GM12878 (cell line): ENCODE measurements at regions of chr2 and their contacts with region 1.

Region 1: DNA sequence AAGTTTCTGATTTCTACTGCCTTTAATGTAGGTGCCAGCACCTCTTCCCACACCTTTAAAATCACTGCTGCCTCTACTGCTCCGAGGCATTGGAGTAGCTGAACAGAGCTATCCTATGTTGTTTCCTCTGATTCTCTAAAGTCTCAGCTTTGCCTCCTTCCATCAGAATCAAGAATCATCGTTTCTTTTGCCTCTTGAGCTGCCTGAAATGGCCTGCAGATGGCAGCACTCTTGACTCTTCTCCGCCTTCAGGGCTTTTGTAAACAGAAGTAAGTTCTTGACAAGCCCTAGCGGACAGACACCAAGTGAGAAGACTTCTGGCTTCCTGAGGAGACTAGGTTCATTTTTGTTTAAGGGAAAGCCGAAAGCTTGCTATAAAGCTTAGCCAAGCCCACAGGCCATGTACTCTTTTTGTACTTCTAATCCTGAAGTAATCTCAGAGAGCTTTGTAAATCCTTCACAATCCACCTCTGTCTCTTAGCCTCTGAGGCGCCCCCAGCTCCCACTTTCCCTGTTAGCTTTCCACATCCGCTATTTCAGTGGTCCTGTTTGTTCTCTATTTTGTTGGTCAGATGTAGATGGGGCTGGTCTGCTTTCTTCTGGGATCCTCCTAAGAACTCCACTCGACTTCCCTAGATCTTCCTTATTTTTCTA is 48.4 kb downstream of the GTF3C3 start:
- DNase-seq: peak; percentile 30
- ATAC-seq: peak; percentile 99
- H3K4me3 ChIP-seq: no peak overlapping the region
- H3K27ac ChIP-seq: no peak overlapping the region
- H3K4me1 ChIP-seq: no peaks in the 10 kb centered on the region; the same call in 1 of the 2 replicates
- H3K27me3 ChIP-seq: no peaks in the 10 kb centered on the region
- CTCF ChIP-seq: peak; percentile 76 to 84 (median 84)
- EP300 ChIP-seq: no peak
- POLR2A ChIP-seq: no peak
- RAD21 ChIP-seq: peak; percentile 47

Region 2: GRCh38 chr2:196291873-196292800 is 459.0 kb before region 1 on chr2:
- CTCF ChIA-PET with region 1: no interaction called
- POLR2A ChIA-PET with region 1: no interaction called
- RAD21 ChIA-PET with region 1: no interaction called
- SMC1A ChIA-PET with region 1: no interaction called
- in situ Hi-C with region 1: no loop called
- intact Hi-C with region 1: loop called (anchors 10 kb)
- DNase-seq: no peak
- ATAC-seq: peak; percentile 10
- H3K4me3 ChIP-seq: no peak overlapping the region
- H3K27ac ChIP-seq: peak overlapping the region; percentile 51; the same call in 1 of the 2 replicates
- H3K4me1 ChIP-seq: peaks cover 32% of the 10 kb centered on the region
- H3K27me3 ChIP-seq: no peaks in the 10 kb centered on the region
- CTCF ChIP-seq: no peak
- EP300 ChIP-seq: no peak
- POLR2A ChIP-seq: no peak
- RAD21 ChIP-seq: no peak

Region 3: DNA sequence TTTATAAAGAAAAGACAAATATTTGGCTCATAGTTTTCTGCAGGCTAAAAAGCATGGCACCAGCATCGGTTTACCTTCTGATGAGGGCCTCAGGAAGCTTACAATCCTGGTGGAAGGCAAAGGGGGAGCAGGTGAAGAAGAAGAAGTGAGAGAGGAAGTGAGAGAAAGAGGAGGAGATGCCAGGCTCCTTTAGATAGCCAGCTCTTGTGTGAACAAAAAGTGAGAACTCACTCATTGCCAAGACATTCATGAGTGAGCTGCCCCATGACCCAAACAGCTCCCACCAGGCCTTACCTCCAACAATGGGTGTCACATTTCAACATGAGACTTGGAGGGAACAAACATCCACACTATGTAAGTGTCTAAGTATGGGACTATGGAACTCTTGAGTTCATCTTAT is 97.3 kb before region 1 on chr2:
- CTCF ChIA-PET with region 1: no interaction called
- POLR2A ChIA-PET with region 1: no interaction called
- RAD21 ChIA-PET with region 1: no interaction called
- SMC1A ChIA-PET with region 1: no interaction called
- in situ Hi-C with region 1: no loop called
- intact Hi-C with region 1: no loop called
- DNase-seq: no peak
- ATAC-seq: no peak
- H3K4me3 ChIP-seq: no peak overlapping the region
- H3K27ac ChIP-seq: no peak overlapping the region
- H3K4me1 ChIP-seq: no peaks in the 10 kb centered on the region
- H3K27me3 ChIP-seq: no peaks in the 10 kb centered on the region
- CTCF ChIP-seq: no peak
- EP300 ChIP-seq: no peak
- POLR2A ChIP-seq: no peak
- RAD21 ChIP-seq: no peak

Region 4: DNA sequence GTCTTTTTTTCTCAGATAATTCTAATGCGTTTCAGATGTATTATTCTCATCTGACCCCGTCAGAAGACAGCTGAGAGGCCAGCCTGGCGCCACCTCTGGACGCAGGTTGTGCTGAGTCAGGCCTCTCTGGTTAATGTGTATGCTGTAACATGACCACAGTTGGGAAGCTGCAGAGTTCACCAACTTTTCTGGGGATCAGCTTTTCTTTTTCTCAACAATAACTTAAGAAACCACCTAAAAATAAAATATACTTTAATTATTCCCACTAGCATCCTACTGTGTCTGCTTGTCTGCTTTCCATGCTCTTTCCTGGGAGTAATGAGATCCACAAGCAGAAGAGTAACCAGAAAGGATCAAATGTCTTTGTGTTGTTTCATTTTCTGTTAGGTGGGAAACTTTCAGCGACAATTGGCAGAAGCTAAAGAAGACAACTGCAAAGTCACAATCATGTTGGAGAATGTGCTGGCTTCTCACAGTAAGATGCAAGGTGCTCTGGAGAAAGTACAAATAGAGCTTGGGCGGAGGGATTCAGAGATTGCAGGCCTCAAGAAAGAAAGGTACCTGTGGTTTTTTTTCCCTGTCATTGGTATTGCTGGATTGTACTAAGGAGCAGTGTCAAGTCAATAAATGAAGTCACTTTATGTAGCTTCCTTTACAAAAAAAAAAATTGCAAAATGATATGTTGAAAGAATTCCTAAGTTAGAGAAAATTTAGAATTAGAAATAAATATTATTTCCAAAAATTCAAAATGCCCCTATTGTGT is 31.8 kb before region 1 on chr2:
- CTCF ChIA-PET with region 1: interaction called, 10 read pairs
- POLR2A ChIA-PET with region 1: no interaction called
- RAD21 ChIA-PET with region 1: no interaction called
- SMC1A ChIA-PET with region 1: interaction called, 3 read pairs
- in situ Hi-C with region 1: no loop called
- intact Hi-C with region 1: no loop called
- DNase-seq: no peak
- ATAC-seq: peak; percentile 67
- H3K4me3 ChIP-seq: no peak overlapping the region
- H3K27ac ChIP-seq: no peak overlapping the region
- H3K4me1 ChIP-seq: no peaks in the 10 kb centered on the region
- H3K27me3 ChIP-seq: no peaks in the 10 kb centered on the region
- CTCF ChIP-seq: 0 out of 6 replicates have a peak, but pooled peaks of 1 of the 3 experiments have one; percentile 9
- EP300 ChIP-seq: no peak
- POLR2A ChIP-seq: no peak
- RAD21 ChIP-seq: no peak

Region 5: DNA sequence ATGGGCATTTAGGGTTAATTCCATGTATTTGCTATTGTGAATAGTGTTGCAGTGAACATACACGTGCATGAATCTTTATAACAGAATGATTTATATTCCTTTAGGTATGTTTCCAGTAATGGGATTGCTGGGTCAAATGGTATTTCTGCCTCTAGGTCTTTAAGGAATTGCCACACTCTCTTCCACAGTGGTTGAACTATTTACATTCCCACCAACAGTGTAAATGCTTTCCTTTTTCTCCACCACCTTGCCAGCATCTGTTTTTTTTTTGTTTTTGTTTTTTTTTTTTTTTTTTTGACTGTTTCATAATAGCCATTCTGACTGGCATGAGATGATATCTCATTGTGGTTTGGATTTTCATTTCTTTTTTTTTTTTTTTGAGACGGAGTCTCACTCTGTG is 14.1 kb before region 1 on chr2:
- CTCF ChIA-PET with region 1: interaction called, 31 read pairs
- POLR2A ChIA-PET with region 1: interaction called, 3 read pairs
- RAD21 ChIA-PET with region 1: no interaction called
- SMC1A ChIA-PET with region 1: interaction called, 10 read pairs
- in situ Hi-C with region 1: no loop called
- intact Hi-C with region 1: no loop called
- DNase-seq: no peak
- ATAC-seq: no peak
- H3K4me3 ChIP-seq: no peak overlapping the region
- H3K27ac ChIP-seq: no peak overlapping the region
- H3K4me1 ChIP-seq: no peaks in the 10 kb centered on the region
- H3K27me3 ChIP-seq: no peaks in the 10 kb centered on the region
- CTCF ChIP-seq: no peak
- EP300 ChIP-seq: no peak
- POLR2A ChIP-seq: no peak
- RAD21 ChIP-seq: no peak

Region 6: DNA sequence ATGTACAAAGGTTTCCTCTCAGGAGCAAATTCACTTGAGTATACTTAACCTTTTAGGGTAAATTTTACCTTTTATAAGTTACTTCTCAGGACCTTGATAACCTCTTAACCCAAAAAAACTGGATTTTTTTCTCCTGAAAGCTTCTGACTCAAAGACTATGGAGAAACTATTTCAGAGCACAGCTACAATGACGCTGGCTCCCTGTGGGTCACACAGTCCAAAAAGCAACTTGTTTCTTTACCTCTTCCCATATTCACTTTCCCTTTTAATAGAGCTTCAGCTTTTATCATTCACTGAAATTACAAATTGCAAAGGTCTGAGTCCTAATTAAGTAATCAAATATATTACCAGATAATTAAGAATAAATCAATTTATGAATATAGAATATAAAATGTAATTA is 16.0 kb after region 1 on chr2:
- CTCF ChIA-PET with region 1: interaction called, 31 read pairs
- POLR2A ChIA-PET with region 1: no interaction called
- RAD21 ChIA-PET with region 1: no interaction called
- SMC1A ChIA-PET with region 1: interaction called, 11 read pairs
- in situ Hi-C with region 1: no loop called
- intact Hi-C with region 1: no loop called
- DNase-seq: no peak
- ATAC-seq: no peak
- H3K4me3 ChIP-seq: no peak overlapping the region
- H3K27ac ChIP-seq: no peak overlapping the region
- H3K4me1 ChIP-seq: no peaks in the 10 kb centered on the region
- H3K27me3 ChIP-seq: no peaks in the 10 kb centered on the region
- CTCF ChIP-seq: no peak
- EP300 ChIP-seq: no peak
- POLR2A ChIP-seq: no peak
- RAD21 ChIP-seq: no peak

Region 7: DNA sequence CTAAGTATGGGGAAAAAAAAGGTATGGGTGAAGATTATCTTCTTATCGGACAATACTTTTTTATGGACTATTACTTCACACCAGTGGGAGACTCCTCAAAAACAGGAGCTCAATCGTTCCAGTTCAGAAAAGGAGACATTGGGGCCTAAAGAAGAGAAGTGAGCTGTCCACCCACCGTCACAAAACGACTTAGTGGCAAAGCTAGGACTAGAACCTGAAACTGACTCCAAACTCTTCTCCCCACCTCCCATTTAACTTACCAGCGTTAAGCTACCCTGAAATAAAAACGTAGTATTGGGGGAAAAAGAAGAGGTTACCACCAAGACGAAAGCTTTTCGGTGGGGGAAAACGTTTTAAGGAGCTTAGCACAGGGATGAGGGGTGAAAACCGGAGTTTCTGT is 47.9 kb after region 1 on chr2:
- CTCF ChIA-PET with region 1: interaction called, 8 read pairs
- POLR2A ChIA-PET with region 1: no interaction called
- RAD21 ChIA-PET with region 1: no interaction called
- SMC1A ChIA-PET with region 1: interaction called, 11 read pairs
- in situ Hi-C with region 1: no loop called
- intact Hi-C with region 1: no loop called
- DNase-seq: no peak
- ATAC-seq: peak; percentile 21
- H3K4me3 ChIP-seq: peak overlapping the region; percentile 82
- H3K27ac ChIP-seq: peak overlapping the region; percentile 76
- H3K4me1 ChIP-seq: no peaks in the 10 kb centered on the region; the same call in 1 of the 2 replicates
- H3K27me3 ChIP-seq: no peaks in the 10 kb centered on the region
- CTCF ChIP-seq: no peak
- EP300 ChIP-seq: no peak
- POLR2A ChIP-seq: no peak
- RAD21 ChIP-seq: no peak